MCF 10A (cell line): ENCODE measurements at regions of chr11 and their contacts with region 1.

Region 1: GRCh38 chr11:122215244-122215992 is 99.4 kb upstream of the BLID start:
- DNase-seq: peak; percentile 66
- H3K4me3 Mint-ChIP-seq: no peak overlapping the region
- H3K27ac Mint-ChIP-seq: no peak overlapping the region
- H3K4me1 Mint-ChIP-seq: peaks cover 21% of the 10 kb centered on the region
- H3K27me3 Mint-ChIP-seq: no peaks in the 10 kb centered on the region
- CTCF ChIP-seq: peak; percentile 89

Region 2: DNA sequence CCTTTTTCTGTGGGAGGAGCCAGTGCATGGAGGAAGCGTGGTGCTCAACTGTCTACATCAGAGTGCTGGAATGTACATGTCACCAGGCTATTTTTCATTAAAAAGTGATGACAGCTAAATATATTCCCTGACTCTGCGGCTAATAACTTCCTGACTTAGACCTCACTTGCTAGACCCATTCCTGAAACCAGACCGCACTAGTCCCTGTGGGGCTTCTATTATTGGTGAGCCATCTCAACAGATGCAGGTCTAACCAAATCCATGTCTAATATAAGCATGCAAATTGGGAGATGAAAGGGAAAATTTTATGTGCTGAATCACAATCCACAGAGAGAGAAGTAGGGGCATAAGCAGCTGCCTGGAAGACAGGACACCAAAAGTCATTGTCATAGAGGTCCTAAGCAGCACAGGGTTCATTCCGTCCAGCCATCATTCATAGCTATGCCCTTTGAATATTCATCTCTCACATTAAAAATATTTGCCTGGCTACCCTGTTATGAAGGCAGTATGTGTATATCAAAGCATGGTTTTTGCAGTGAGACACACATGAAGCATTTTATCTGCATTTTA is 11.5 kb after region 1 on chr11:
- CTCF ChIA-PET with region 1: interaction called, 25 read pairs
- POLR2A ChIA-PET with region 1: interaction called, 3 read pairs
- intact Hi-C with region 1: no loop called
- DNase-seq: no peak
- H3K4me3 Mint-ChIP-seq: no peak overlapping the region
- H3K27ac Mint-ChIP-seq: no peak overlapping the region
- H3K4me1 Mint-ChIP-seq: no peaks in the 10 kb centered on the region
- H3K27me3 Mint-ChIP-seq: no peaks in the 10 kb centered on the region
- CTCF ChIP-seq: no peak

Region 3: DNA sequence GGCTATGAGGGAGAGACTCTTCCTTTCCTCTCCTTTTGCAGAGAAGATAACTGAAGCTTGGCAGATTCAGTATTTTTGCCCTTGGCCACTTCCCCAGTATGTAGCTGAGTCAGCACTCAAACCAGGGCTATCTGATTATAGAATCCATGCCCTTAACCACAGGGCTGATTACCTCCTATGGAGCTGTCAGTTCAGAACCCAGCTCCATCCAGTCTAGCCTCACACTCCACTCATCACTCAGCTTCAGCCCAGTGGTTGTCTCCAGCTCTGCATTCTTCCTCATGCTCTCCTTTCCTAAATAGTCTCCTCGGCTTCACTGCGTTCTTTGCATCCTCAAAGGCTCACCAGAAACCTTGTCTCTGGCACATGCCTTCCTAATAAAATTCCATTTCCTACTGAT is 52.2 kb after region 1 on chr11:
- CTCF ChIA-PET with region 1: no interaction called
- POLR2A ChIA-PET with region 1: no interaction called
- intact Hi-C with region 1: no loop called
- DNase-seq: peak; percentile 32
- H3K4me3 Mint-ChIP-seq: no peak overlapping the region
- H3K27ac Mint-ChIP-seq: no peak overlapping the region
- H3K4me1 Mint-ChIP-seq: peaks cover 7% of the 10 kb centered on the region
- H3K27me3 Mint-ChIP-seq: no peaks in the 10 kb centered on the region
- CTCF ChIP-seq: no peak